ENCODE measurements at regions of chr7 and their contacts with region 1.

Region 1: GRCh38 chr7:142323706-142324105 is 65.8 kb upstream of the PRSS58 start:
- DNase-seq: peak; percentile 81
- H3K4me3 Mint-ChIP-seq: peak overlapping the region; percentile 41
- H3K27ac Mint-ChIP-seq: peak overlapping the region; percentile 73
- H3K4me1 Mint-ChIP-seq: peaks cover 29% of the 10 kb centered on the region
- H3K27me3 Mint-ChIP-seq: no peaks in the 10 kb centered on the region

Region 2: DNA sequence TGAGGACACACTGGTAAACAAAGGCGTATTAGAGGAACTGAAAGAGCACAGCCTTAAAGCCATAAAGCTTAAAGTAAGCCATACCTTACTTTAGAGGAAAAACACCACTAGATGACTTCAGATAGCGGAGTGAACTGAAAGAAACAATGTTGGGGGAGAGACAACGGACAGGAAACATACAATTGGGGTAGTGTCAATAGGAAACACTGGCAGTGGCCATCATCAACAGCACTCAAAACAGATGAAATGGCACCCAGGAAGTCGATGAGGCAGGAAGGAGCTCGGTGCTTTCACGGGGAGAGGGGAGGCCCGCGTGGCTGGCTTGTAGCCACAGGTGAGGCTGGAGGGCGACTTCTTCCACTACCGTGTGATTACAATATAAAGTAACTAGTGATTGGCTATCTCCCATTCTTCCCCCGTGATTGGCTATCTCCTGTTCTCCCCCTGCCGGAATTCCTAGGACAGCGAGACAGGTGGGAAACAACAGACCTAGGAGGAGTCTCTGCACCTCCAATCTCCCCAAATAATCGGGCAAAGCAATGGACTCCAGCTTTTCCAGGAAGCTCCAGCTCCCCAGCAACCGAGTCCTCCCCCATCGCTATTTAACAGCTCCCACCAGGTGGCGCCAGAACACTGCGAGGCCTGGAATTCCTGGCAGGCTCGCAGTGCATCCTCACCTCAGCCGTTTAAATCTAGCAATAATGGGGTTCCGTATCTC is 347.7 kb before region 1 on chr7:
- CTCF ChIA-PET with region 1: interaction called, 5 read pairs
- intact Hi-C with region 1: loop called (anchors 5 kb)
- DNase-seq: peak; percentile 88
- H3K4me3 Mint-ChIP-seq: peak overlapping the region; percentile 76
- H3K27ac Mint-ChIP-seq: peak overlapping the region; percentile 28
- H3K4me1 Mint-ChIP-seq: peaks cover 18% of the 10 kb centered on the region
- H3K27me3 Mint-ChIP-seq: no peaks in the 10 kb centered on the region

Region 3: GRCh38 chr7:142313528-142313927 is 10.2 kb before region 1 on chr7:
- CTCF ChIA-PET with region 1: interaction called, 10 read pairs
- intact Hi-C with region 1: no loop called
- DNase-seq: peak; percentile 72
- H3K4me3 Mint-ChIP-seq: peak overlapping the region; percentile 55
- H3K27ac Mint-ChIP-seq: peak overlapping the region; percentile 63
- H3K4me1 Mint-ChIP-seq: peaks cover 13% of the 10 kb centered on the region
- H3K27me3 Mint-ChIP-seq: peaks cover 5% of the 10 kb centered on the region

Region 4: GRCh38 chr7:142345811-142346210 is 22.1 kb after region 1 on chr7:
- CTCF ChIA-PET with region 1: interaction called, 30 read pairs
- intact Hi-C with region 1: loop called (anchors 1 kb)
- DNase-seq: peak; percentile 73
- H3K4me3 Mint-ChIP-seq: peak overlapping the region; percentile 41
- H3K27ac Mint-ChIP-seq: peak overlapping the region; percentile 59
- H3K4me1 Mint-ChIP-seq: peaks cover 21% of the 10 kb centered on the region
- H3K27me3 Mint-ChIP-seq: peaks cover 2% of the 10 kb centered on the region

Region 5: GRCh38 chr7:142357953-142358520 is 34.3 kb after region 1 on chr7:
- CTCF ChIA-PET with region 1: interaction called, 12 read pairs
- intact Hi-C with region 1: no loop called
- DNase-seq: peak; percentile 59
- H3K4me3 Mint-ChIP-seq: peak overlapping the region; percentile 29
- H3K27ac Mint-ChIP-seq: no peak overlapping the region
- H3K4me1 Mint-ChIP-seq: peaks cover 38% of the 10 kb centered on the region
- H3K27me3 Mint-ChIP-seq: no peaks in the 10 kb centered on the region

Region 6: DNA sequence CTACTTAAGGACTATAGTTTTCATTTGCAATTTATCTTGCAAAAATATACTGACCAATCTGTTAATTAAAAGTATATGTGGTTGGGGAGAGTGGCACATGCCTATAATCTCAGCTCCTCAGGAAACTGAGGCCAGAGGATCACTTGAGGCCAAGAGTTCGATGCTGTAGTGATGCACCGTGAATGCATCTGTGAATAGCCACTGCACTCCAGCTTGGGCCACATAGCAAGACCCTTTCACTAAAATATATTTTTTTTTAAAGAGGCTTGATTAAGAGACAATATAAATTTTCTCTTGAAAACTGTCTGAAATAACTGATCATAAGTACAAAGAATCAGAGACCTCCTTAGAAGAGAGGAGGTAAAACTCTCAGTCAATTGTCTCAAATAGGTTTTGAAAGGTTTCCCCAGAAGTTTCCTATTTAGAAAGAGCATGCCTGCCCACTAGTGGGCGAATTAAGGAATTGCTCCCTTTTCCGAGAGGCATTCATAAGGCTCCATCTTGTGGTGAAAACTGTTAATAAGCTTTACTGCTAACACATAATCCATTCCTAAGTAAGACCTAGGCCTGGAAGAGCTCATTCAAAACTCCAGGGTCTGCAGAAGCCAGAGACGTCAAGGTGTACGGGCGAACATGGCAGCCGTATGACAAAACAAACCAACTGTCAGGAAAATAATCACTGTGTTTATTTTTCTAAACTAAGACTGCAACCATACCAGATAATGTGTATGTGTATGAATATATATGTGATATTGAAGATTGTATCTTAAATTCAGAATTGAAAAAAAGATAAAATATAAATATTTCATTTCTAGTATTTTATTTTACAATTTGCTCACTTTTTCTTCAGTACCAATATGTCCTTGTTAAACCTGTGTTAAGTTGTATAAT is 891.3 kb after region 1 on chr7:
- CTCF ChIA-PET with region 1: interaction called, 6 read pairs
- intact Hi-C with region 1: loop called (anchors 5 kb)
- DNase-seq: peak; percentile 73
- H3K4me3 Mint-ChIP-seq: no peak overlapping the region
- H3K27ac Mint-ChIP-seq: no peak overlapping the region
- H3K4me1 Mint-ChIP-seq: no peaks in the 10 kb centered on the region
- H3K27me3 Mint-ChIP-seq: no peaks in the 10 kb centered on the region